ENCODE measurements at regions of chr20 and their contacts with region 1.

Region 1: DNA sequence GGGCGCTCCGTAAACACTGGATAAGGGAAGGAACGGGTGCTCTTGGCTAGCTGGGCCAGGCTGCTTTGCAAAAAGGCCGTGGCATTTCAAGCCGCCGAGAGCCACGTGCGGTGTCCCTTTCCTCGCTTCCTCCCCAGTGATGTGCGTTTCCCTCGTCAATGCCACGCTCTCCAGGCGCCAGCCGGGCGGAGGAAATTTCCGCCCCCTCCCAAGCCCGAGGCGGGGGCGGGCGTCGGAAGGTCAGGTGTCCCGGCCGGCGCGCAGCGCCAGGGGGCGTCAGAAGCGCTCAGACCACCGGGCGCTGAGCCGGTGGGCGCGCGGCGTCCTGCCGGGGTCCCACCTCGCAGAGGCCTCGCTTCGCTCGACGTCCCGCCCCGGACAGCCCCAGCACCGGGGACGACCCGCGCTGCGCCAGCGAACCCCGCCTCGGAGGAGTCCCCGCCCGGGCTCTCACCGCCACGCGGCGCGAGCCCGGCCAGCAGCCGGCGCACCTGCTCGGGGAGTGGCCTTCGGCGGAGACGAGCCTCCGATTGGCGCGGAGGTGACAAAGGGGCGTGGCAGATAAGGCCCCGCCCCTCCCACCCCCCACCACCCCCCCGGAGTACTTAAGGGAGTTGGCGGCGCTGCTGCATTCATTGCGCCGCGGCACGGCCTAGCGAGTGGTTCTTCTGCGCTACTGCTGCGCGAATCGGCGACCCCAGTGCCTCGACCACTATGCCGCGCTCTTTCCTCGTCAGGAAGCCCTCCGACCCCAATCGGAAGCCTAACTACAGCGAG is at the start of gene SNAI1:
- DNase-seq: peak; percentile 84
- H3K4me3 ChIP-seq: peak within 1 kb of the TSS; percentile 49 to 97 (median 89)
- H3K27ac ChIP-seq: peak within 1 kb of the TSS; percentile 87
- H3K4me1 ChIP-seq: peaks cover 49% of the 10 kb centered on the region
- H3K27me3 ChIP-seq: no peaks in the 10 kb centered on the region
- CTCF ChIP-seq: peak; percentile 61 to 68
- POLR2A ChIP-seq: peak; percentile 99
- total RNA-seq, gene SNAI1: 13.4 and 14.5 TPM in 2 replicates

Region 2: GRCh38 chr20:49964964-49965780 is 17.4 kb before region 1 on chr20:
- CTCF ChIA-PET with region 1: interaction called, 27 read pairs
- POLR2A ChIA-PET with region 1: no interaction called
- dilution Hi-C with region 1: no loop called
- intact Hi-C with region 1: no loop called
- DNase-seq: peak; percentile 49
- H3K4me3 ChIP-seq: no peak overlapping the region
- H3K27ac ChIP-seq: no peak overlapping the region
- H3K4me1 ChIP-seq: peaks cover 7% of the 10 kb centered on the region
- H3K27me3 ChIP-seq: no peaks in the 10 kb centered on the region
- CTCF ChIP-seq: peak; percentile 75 to 86
- POLR2A ChIP-seq: no peak

Region 3: GRCh38 chr20:50029697-50030461 is 47.3 kb after region 1 on chr20:
- CTCF ChIA-PET with region 1: interaction called, 30 read pairs
- POLR2A ChIA-PET with region 1: interaction called, 13 read pairs
- dilution Hi-C with region 1: no loop called
- intact Hi-C with region 1: loop called (anchors 1 kb)
- DNase-seq: peak; percentile 93
- H3K4me3 ChIP-seq: peak overlapping the region in 1 of 3 experiments; percentile 2
- H3K27ac ChIP-seq: peak overlapping the region; percentile 99
- H3K4me1 ChIP-seq: peaks cover 57% of the 10 kb centered on the region
- H3K27me3 ChIP-seq: no peaks in the 10 kb centered on the region
- CTCF ChIP-seq: no peak
- POLR2A ChIP-seq: peak; percentile 66

Region 4: DNA sequence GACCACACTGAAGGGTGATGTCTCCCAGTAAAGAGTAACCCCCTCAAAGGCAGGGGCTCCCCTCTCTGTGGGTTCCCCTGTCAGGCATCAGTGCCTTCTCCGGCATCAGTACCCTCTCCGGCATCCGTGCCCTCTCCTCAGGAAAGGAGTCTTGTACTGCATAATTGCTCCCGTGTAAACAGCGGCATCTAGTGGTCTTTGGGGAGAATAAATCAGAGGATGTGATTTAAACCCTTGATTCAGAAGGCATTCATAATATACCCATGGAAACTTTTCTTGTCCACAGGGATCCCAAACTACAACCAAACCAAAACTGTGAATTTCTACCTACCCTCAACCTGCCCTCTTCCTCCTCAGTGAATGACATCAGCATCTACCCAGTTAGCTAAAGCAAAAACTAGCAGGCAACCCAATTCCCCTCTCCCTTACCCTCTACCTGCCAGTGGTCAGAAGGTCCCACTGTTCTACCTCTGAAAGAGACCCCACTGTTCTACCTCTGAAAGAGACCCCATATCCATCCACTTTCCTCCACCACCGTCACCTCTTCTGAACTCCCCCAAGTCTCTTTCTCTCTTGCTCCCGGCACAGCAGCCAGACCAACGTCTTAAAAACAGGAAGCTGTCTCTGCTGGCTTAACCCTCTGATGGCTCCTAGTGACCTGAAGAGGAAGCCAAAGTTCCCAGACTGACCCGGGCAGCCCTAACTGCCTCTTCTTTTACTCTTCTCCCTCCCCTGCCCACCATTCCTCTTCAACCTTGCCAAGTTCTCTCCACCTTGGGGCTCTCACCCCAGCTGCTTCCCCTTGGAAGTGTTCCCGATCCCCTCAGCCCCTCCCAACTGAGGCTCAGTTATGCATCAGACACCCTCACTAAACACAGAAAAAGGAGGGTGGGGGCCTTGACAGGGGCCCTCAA is 103.2 kb after region 1 on chr20:
- CTCF ChIA-PET with region 1: interaction called, 95 read pairs
- POLR2A ChIA-PET with region 1: no interaction called
- dilution Hi-C with region 1: no loop called
- intact Hi-C with region 1: loop called (anchors 1 kb)
- DNase-seq: peak; percentile 85
- H3K4me3 ChIP-seq: peak overlapping the region in 1 of 3 experiments; percentile 31
- H3K27ac ChIP-seq: peak overlapping the region; percentile 91
- H3K4me1 ChIP-seq: peaks cover 19% of the 10 kb centered on the region
- H3K27me3 ChIP-seq: no peaks in the 10 kb centered on the region
- CTCF ChIP-seq: peak; percentile 71 to 80
- POLR2A ChIP-seq: no peak

Region 5: DNA sequence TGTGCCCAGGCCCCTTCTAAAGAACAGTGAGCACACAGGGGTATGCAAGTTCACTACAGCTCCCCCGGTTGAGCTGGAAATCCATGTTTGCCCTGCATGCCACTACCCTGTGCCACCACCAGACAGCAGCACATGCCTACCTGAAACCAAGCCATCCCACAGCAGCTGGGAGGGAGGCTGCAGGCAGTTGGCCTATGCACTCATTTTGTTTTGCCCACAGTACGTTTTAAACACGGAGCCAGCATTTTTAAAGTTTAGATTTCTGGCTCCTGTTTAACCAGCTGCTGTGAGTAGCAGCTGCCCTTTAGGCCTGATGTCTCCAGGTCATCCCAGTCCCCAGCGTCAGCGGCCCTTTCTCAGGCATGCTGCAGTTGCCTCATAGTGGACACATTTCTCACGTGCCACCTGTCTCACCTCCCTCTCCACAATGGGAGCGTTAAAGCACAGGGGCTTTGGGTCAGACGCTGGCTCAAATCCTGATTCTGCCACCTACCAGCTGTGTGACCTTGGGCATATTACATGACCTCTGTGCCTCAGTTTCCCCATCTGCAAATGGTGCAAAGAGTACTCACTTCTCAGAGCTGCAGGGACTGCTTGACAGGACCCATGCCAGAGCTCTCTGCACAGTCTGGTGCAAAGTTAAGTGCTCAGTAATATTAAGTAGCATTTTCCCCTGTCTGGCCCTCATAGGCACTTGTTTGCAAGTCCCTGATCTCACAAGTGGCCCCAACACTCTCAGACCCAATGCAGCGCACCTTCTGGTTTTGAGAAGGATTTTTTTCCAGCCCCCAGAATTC is 138.6 kb after region 1 on chr20:
- CTCF ChIA-PET with region 1: interaction called, 37 read pairs
- POLR2A ChIA-PET with region 1: no interaction called
- dilution Hi-C with region 1: no loop called
- intact Hi-C with region 1: no loop called
- DNase-seq: peak; percentile 67
- H3K4me3 ChIP-seq: no peak overlapping the region
- H3K27ac ChIP-seq: no peak overlapping the region
- H3K4me1 ChIP-seq: peaks cover 1% of the 10 kb centered on the region
- H3K27me3 ChIP-seq: no peaks in the 10 kb centered on the region
- CTCF ChIP-seq: peak; percentile 78 to 97
- POLR2A ChIP-seq: peak; percentile 39

Region 6: DNA sequence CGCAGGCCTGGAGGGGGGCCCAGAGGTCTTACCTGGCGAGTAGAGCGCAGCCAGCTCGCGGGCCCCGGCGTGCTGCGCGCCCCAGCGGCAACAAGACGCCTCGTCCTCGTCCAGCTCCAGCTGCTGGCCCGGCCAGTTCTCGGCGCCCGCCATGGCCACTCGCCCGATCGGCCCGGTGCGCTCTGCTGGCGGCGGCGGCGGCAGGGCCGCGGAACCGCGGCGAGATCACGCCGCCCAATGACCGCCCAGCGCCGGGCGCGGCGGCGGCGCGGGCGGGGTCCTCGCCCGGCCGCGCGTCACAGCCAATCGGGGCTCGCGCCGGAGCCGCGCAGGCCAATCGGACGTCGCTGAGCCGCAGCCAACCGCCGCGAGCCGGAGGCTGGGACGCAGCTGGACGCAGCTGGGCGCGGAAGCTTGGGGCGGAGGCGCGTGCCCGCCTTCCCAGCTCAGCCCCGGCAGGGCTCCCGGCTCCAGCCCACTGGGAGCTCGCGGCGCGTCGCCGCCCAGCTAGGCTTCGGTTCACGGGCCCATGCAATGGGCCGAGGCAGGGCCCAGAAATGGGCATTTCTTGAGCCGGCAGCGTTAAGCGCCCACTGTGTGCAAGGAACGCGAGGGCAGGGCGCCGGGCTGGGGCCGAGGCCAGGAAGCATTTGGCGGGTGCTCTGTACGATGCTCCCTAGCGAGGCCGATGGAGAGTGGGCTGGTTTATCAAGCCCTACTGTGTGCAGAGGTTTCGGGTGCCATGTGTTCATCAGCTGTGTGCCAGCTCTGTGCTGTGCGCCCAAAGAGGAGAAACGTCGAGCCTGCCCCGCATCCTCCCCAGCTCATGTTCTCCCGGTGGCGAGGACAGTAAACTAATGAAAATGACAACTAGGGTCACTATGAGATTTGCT is 171.2 kb after region 1 on chr20 and contains the start of gene PEDS1:
- CTCF ChIA-PET with region 1: interaction called, 12 read pairs
- POLR2A ChIA-PET with region 1: interaction called, 7 read pairs
- dilution Hi-C with region 1: no loop called
- intact Hi-C with region 1: loop called (anchors 5 kb)
- DNase-seq: peak; percentile 88
- H3K4me3 ChIP-seq: peak within 1 kb of the TSS; percentile 53 to 86 (median 80)
- H3K27ac ChIP-seq: peak within 1 kb of the TSS; percentile 77
- H3K4me1 ChIP-seq: peaks cover 39% of the 10 kb centered on the region
- H3K27me3 ChIP-seq: no peaks in the 10 kb centered on the region
- CTCF ChIP-seq: no peak
- POLR2A ChIP-seq: peak; percentile 90
- total RNA-seq, gene PEDS1: 62.7 and 71.9 TPM in 2 replicates

Region 7: DNA sequence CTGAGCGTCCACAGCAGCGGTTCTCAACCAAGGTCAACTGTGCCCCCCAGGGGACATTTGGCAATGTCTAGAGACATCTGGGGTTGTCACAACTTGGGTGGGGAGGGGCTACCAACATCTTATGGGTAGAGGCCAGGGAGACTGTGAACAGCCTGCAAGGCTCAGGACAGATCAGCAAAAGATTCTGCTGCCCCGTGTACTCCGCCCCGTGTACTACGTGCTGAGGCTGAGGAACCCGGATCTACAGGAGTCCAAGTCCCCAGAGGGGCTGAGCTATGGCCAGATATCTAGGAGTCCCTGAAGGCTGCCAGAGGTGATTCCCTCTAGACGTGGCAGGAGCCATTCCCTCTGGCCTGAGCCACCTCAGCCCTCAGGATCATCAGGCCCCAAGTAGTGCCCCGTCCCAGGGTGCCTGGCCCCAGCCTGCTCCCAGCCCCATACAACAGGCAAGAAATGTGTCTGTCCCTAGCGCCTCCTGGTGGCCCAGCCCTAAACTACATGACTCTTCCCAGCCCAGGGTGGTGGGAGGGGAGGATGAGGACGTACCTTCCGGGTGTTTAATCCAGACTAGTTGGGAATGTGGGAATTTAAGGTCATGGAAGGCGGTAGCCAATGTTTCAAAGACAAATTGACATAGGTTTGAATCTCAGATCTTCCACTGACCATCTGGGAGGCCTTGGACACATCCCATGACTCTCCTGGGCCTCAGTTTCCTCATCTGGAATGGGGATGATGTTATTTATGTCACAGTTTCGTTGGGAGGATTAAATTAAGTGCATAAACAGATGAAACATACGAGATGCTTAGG is 478.1 kb after region 1 on chr20:
- CTCF ChIA-PET with region 1: interaction called, 5 read pairs
- POLR2A ChIA-PET with region 1: no interaction called
- dilution Hi-C with region 1: no loop called
- intact Hi-C with region 1: loop called (anchors 10 kb)
- DNase-seq: peak; percentile 84
- H3K4me3 ChIP-seq: no peak overlapping the region
- H3K27ac ChIP-seq: no peak overlapping the region
- H3K4me1 ChIP-seq: no peaks in the 10 kb centered on the region
- H3K27me3 ChIP-seq: no peaks in the 10 kb centered on the region
- CTCF ChIP-seq: peak; percentile 88 to 90
- POLR2A ChIP-seq: no peak